ENCODE measurements at regions of chr2 and their contacts with region 1.

Region 1: GRCh38 chr2:186256540-186256939 is 229.5 kb upstream of the ZC3H15 start:
- DNase-seq: peak; percentile 29
- ATAC-seq: peak; percentile 64
- H3K4me3 ChIP-seq: no peak overlapping the region
- H3K27ac ChIP-seq: no peak overlapping the region
- H3K4me1 ChIP-seq: no peaks in the 10 kb centered on the region
- H3K27me3 ChIP-seq: no peaks in the 10 kb centered on the region
- CTCF ChIP-seq: peak; percentile 40 to 66 (median 57); a peak in 5 of 6 replicates
- POLR2A ChIP-seq: no peak
- RAD21 ChIP-seq: peak; percentile 82

Region 2: GRCh38 chr2:185208261-185208660 is 1048.3 kb before region 1 on chr2:
- CTCF ChIA-PET with region 1: no interaction called
- POLR2A ChIA-PET with region 1: no interaction called
- RAD21 ChIA-PET with region 1: no interaction called
- intact Hi-C with region 1: loop called (anchors 1 kb)
- DNase-seq: peak; percentile 45
- ATAC-seq: peak; percentile 95
- H3K4me3 ChIP-seq: no peak overlapping the region
- H3K27ac ChIP-seq: no peak overlapping the region
- H3K4me1 ChIP-seq: no peaks in the 10 kb centered on the region
- H3K27me3 ChIP-seq: no peaks in the 10 kb centered on the region
- CTCF ChIP-seq: peak; percentile 45 to 71 (median 68); a peak in 5 of 6 replicates
- POLR2A ChIP-seq: no peak
- RAD21 ChIP-seq: peak; percentile 80

Region 3: GRCh38 chr2:185291035-185291647 is 965.4 kb before region 1 on chr2:
- CTCF ChIA-PET with region 1: interaction called, 3 read pairs
- POLR2A ChIA-PET with region 1: no interaction called
- RAD21 ChIA-PET with region 1: no interaction called
- intact Hi-C with region 1: loop called (anchors 5 kb)
- DNase-seq: peak; percentile 40
- ATAC-seq: peak; percentile 99
- H3K4me3 ChIP-seq: no peak overlapping the region
- H3K27ac ChIP-seq: no peak overlapping the region
- H3K4me1 ChIP-seq: no peaks in the 10 kb centered on the region
- H3K27me3 ChIP-seq: no peaks in the 10 kb centered on the region
- CTCF ChIP-seq: peak; percentile 23 to 77 (median 65); a peak in 5 of 6 replicates
- POLR2A ChIP-seq: no peak
- RAD21 ChIP-seq: peak; percentile 67

Region 4: DNA sequence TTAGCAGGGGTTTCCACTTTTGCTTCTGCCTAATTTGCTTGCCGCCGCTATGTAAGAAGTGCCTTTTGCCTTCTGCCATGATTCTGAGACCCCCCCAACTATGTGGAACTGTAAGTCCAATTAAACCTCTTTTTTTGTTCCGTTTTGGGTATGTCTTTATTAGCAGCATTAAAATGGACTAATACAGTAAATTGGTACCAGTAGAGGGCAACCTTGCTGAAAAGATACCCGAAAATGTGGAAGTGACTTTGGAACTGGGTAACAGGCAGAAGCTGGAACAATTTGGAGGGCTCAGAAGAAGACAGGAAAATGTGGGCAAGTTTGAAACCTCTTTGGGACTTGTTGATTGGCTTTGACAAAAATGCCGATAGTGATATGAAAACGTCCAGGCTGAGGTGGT is 734.1 kb before region 1 on chr2:
- CTCF ChIA-PET with region 1: no interaction called
- POLR2A ChIA-PET with region 1: no interaction called
- RAD21 ChIA-PET with region 1: no interaction called
- intact Hi-C with region 1: loop called (anchors 1 kb)
- DNase-seq: no peak
- ATAC-seq: no peak
- H3K4me3 ChIP-seq: no peak overlapping the region
- H3K27ac ChIP-seq: no peak overlapping the region
- H3K4me1 ChIP-seq: no peaks in the 10 kb centered on the region
- H3K27me3 ChIP-seq: no peaks in the 10 kb centered on the region
- CTCF ChIP-seq: peak in 1 of 3 experiments; percentile 33; a peak in 2 of 6 replicates
- POLR2A ChIP-seq: no peak
- RAD21 ChIP-seq: peak; percentile 36

Region 5: DNA sequence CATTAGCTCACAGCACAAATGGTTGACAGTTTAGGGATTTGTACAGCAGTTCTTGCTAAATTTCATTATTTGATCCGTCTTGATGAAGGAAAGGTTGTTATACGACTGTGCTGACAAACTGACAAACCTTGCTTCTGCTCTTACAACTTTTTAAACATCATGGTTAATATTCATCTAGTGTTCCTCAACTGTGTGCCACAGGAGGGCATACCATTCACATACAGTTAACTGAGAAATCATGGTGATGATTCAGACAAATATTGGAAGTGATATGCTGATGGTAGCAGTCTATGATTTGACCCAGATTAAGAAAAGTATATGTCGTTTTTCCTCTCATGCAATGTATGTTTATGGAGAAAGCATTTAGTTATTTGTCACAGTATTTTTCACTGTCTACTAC is 647.7 kb before region 1 on chr2:
- CTCF ChIA-PET with region 1: no interaction called
- POLR2A ChIA-PET with region 1: no interaction called
- RAD21 ChIA-PET with region 1: no interaction called
- intact Hi-C with region 1: loop called (anchors 1 kb)
- DNase-seq: peak; percentile 8
- ATAC-seq: peak; percentile 44; the same call in 1 of the 2 replicates
- H3K4me3 ChIP-seq: no peak overlapping the region
- H3K27ac ChIP-seq: no peak overlapping the region
- H3K4me1 ChIP-seq: no peaks in the 10 kb centered on the region
- H3K27me3 ChIP-seq: no peaks in the 10 kb centered on the region
- CTCF ChIP-seq: peak; percentile 35 to 54 (median 38); a peak in 4 of 6 replicates
- POLR2A ChIP-seq: no peak
- RAD21 ChIP-seq: peak; percentile 69

Region 6: GRCh38 chr2:185628985-185629384 is 627.6 kb before region 1 on chr2:
- CTCF ChIA-PET with region 1: no interaction called
- POLR2A ChIA-PET with region 1: no interaction called
- RAD21 ChIA-PET with region 1: no interaction called
- intact Hi-C with region 1: loop called (anchors 5 kb)
- DNase-seq: peak; percentile 29
- ATAC-seq: peak; percentile 72
- H3K4me3 ChIP-seq: no peak overlapping the region
- H3K27ac ChIP-seq: no peak overlapping the region
- H3K4me1 ChIP-seq: no peaks in the 10 kb centered on the region
- H3K27me3 ChIP-seq: no peaks in the 10 kb centered on the region
- CTCF ChIP-seq: peak; percentile 9 to 66 (median 57); a peak in 4 of 6 replicates
- POLR2A ChIP-seq: no peak
- RAD21 ChIP-seq: peak; percentile 41

Region 7: DNA sequence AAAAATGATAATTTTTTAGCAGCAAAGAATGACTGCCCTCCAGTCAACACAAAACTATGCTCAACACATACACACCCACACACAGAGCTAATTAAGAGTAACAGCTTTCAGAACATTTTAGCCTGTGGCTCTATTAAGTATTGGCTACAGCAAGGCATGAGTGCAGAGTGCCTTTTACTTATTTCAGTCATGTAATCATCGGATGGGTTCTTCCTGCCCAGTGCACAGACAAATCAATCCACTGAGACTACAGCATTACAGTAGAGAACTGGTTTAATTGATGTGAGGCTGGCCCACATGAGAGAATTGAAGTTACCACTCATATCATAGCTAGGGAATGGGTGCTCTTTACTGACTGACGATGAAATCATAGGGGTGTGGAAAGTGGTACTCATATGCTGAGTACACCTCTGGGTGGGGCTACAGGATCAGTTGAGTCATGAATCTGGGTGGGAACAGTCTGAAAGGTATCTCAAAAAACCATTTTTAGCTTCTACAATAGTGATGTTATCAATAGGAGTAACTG is 276.9 kb before region 1 on chr2:
- CTCF ChIA-PET with region 1: interaction called, 3 read pairs
- POLR2A ChIA-PET with region 1: no interaction called
- RAD21 ChIA-PET with region 1: no interaction called
- intact Hi-C with region 1: loop called (anchors 10 kb)
- DNase-seq: peak; percentile 57
- ATAC-seq: peak; percentile 93
- H3K4me3 ChIP-seq: no peak overlapping the region
- H3K27ac ChIP-seq: peak overlapping the region; percentile 22; the same call in 1 of the 2 replicates
- H3K4me1 ChIP-seq: peaks cover 7 to 18% of the 10 kb centered on the region in 2 experiments; a peak in 3 of 4 replicates
- H3K27me3 ChIP-seq: no peaks in the 10 kb centered on the region
- CTCF ChIP-seq: peak in 2 of 3 experiments; percentile 10 to 32; a peak in 2 of 6 replicates
- POLR2A ChIP-seq: no peak
- RAD21 ChIP-seq: peak; percentile 59

Region 8: DNA sequence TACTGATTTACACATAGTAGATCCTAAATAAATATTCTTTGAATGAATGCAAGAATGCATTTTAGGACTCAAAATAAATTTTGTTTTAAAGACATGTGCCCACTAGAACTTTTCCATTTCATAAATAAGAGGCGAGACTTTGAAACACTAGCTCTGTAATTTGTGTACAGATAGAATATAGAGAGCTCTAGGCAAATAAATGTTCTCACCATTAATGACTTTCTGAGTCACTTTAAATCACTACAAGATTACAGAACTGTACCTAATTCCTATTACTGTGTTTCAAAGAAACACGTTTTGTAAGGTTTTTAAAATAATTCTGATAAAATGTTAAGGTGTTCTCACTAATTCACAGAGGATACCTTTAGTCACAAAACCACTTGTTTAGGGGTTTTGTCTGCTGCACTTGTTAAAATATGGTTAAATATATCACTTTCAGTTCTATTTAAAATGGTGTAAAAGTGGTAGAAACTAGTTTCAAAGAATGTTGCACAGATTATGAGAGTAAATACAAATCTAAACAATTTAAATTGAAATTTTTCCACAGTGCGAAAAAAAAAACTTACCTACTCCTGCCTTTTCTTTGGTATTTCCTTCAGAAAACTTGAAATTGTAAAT is 70.8 kb after region 1 on chr2:
- CTCF ChIA-PET with region 1: no interaction called
- POLR2A ChIA-PET with region 1: no interaction called
- RAD21 ChIA-PET with region 1: no interaction called
- intact Hi-C with region 1: no loop called
- DNase-seq: no peak
- ATAC-seq: no peak
- H3K4me3 ChIP-seq: no peak overlapping the region
- H3K27ac ChIP-seq: no peak overlapping the region
- H3K4me1 ChIP-seq: no peaks in the 10 kb centered on the region
- H3K27me3 ChIP-seq: no peaks in the 10 kb centered on the region
- CTCF ChIP-seq: no peak
- POLR2A ChIP-seq: no peak
- RAD21 ChIP-seq: no peak